ENCODE measurements at regions of chr1 and their contacts with region 1.

Region 1: GRCh38 chr1:38005195-38006007 is at the start of gene FHL3:
- DNase-seq: peak; percentile 63 to 71
- H3K4me3 ChIP-seq: peak within 1 kb of the TSS in 2 of 3 donors; percentile 25 to 78
- H3K27ac ChIP-seq: peak within 1 kb of the TSS in 2 of 3 donors; percentile 60 to 70
- H3K4me1 ChIP-seq: peaks cover 11 to 27% of the 10 kb centered on the region in 2 donors
- H3K27me3 ChIP-seq: no peaks in the 10 kb centered on the region
- CTCF ChIP-seq: no peak
- POLR2A ChIP-seq: peak in 1 of 2 donors; percentile 45
- total RNA-seq, gene FHL3: 7.5 to 13.8 (median 10.4) TPM

Region 2: GRCh38 chr1:37931361-37932158 is 73.8 kb before region 1 on chr1:
- intact Hi-C with region 1: loop called (anchors 10 kb)
- DNase-seq: peak; percentile 98 to 99
- H3K4me3 ChIP-seq: peak overlapping the region; percentile 47 to 74 (median 66)
- H3K27ac ChIP-seq: peak overlapping the region in 2 of 3 donors; percentile 31 to 57
- H3K4me1 ChIP-seq: peaks cover 13 to 15% of the 10 kb centered on the region in 2 donors
- H3K27me3 ChIP-seq: no peaks in the 10 kb centered on the region
- CTCF ChIP-seq: no peak
- POLR2A ChIP-seq: peak in 1 of 2 donors; percentile 54